Psoas muscle (tissue), 8 donors: ENCODE measurements at regions of chr12 and their contacts with region 1.

Region 1: DNA sequence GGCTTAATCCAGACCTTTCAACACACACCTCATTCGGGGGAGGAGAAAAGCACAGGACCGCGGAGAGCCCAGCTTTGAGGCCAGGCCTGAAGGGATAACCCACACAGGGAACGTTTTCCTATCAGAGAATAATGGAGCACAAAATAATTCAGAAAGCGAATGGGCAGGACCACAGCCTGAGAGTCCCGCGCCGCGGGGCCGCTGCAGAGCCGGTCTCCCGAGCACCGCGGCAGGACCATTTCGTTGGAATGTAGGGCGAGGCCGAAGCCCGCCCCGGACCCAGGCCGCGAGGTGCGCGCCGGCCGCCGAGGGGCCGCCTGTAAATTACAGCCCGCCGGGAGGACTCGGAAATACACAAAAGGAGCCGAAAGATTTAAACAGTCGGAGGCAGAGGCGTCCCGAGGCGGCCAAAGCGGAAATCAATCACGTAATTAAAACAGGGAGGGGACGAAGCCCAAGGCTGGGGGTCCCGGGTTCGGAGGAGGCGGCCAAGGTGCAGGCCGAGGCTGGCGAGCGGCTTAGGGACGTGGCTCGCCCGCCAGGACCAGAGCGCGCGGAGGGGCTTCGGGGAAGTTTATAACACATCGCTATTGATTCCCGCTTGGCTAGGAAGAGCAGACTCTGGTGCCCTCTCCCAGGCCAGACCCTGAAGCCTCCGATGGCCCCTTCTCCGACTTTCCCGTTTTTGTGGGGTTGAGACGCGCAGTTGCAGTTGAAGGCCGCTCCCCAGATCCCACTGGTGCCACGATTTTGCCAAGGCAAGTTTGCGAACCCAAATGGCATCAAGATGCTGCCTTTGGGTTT is 6.3 kb upstream of the HOXC4 start:
- DNase-seq: no peak
- ATAC-seq: peak in 1 of 4 donors; percentile 48
- H3K4me3 ChIP-seq: peak overlapping the region; percentile 4
- H3K27ac ChIP-seq: no peak overlapping the region
- H3K4me1 ChIP-seq: no peaks in the 10 kb centered on the region
- H3K27me3 ChIP-seq: peaks cover 0 to 5% (median 0%) of the 10 kb centered on the region in 3 donors
- CTCF ChIP-seq: no peak

Region 2: DNA sequence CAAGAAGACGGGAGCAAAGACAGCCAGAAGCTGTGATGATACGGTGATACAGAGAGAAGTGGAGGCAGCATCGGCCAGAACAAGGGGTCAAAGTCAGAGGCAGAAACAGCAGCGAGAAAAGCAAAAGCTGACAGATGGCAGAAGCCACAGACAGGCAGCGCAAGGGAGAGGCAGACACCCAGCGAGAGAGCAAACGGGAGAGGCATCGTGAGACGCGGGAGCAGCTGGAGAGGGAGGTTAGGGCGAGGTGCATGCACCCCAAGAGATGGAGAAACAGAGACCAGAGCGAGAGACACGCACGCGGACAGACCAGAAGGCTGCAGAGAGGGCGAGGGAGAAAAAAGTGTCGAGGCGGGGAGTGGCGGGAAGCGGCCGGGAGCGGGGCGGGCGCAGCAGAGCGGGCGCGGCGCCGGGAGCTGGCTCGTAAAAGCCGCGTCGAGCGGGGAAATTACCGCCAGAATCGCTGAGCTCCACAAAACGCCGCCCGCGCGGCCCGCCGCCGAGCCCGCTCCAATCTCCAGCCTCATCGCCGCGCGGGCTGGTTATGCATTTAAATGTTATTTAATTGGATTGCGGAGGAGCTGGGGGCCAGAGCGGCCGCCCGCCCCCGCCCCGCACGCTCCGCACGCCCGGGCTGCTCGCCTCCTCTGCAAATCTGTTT is 125.8 kb after region 1 on chr12:
- intact Hi-C with region 1: loop called in 1 of 2 experiments (anchors 5 kb)
- DNase-seq: peak; percentile 43 to 63
- ATAC-seq: peak; percentile 51 to 84 (median 58)
- H3K4me3 ChIP-seq: peak overlapping the region; percentile 57
- H3K27ac ChIP-seq: no peak overlapping the region
- H3K4me1 ChIP-seq: peaks cover 6% of the 10 kb centered on the region
- H3K27me3 ChIP-seq: peaks cover 0 to 35% (median 13%) of the 10 kb centered on the region in 3 donors
- CTCF ChIP-seq: no peak